ENCODE measurements at regions of chr11 and their contacts with region 1.

Region 1: DNA sequence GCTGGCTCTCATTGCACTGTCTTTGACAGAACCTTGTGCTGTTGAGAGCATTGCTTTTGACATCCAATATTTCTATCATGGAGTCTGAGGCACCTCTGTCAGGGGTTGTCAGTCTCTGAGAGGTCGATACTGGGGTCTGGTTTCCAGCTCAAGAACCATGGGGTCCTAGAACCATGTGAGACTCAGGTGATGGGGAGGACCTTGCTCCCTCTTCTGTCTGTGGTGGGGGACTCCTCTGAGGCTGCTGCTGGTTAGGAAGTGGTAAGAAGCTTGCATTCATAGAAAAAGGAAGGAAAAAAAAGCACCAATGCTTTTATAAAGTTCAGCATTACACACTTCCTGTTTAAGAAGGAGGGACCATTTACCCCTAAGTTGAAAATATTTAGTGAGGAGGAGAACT is 91.8 kb upstream of the CD44 start:
- DNase-seq: peak; percentile 27 to 91 (median 46)
- ATAC-seq: peak; percentile 70
- H3K4me3 ChIP-seq: no peak overlapping the region
- H3K4me3 Mint-ChIP-seq: peak overlapping the region; percentile 83
- H3K27ac ChIP-seq: peak overlapping the region; percentile 93 to 96
- H3K27ac Mint-ChIP-seq: peak overlapping the region; percentile 92
- H3K4me1 ChIP-seq: peaks cover 83% of the 10 kb centered on the region
- H3K4me1 Mint-ChIP-seq: peaks cover 98% of the 10 kb centered on the region
- H3K27me3 ChIP-seq: no peaks in the 10 kb centered on the region
- H3K27me3 Mint-ChIP-seq: no peaks in the 10 kb centered on the region
- CTCF ChIP-seq: no peak

Region 2: GRCh38 chr11:35013514-35014233 is 33.5 kb before region 1 on chr11:
- CTCF ChIA-PET with region 1: interaction called, 6 read pairs
- POLR2A ChIA-PET with region 1: interaction called, 5 read pairs
- intact Hi-C with region 1: loop called in 1 of 2 experiments (anchors 2 kb)
- DNase-seq: peak in 6 of 14 experiments; percentile 18 to 85 (median 53)
- ATAC-seq: peak; percentile 81
- H3K4me3 ChIP-seq: no peak overlapping the region
- H3K4me3 Mint-ChIP-seq: peak overlapping the region; percentile 36
- H3K27ac ChIP-seq: peak overlapping the region; percentile 46 to 80
- H3K27ac Mint-ChIP-seq: peak overlapping the region; percentile 88
- H3K4me1 ChIP-seq: peaks cover 28% of the 10 kb centered on the region
- H3K4me1 Mint-ChIP-seq: peaks cover 37% of the 10 kb centered on the region
- H3K27me3 ChIP-seq: no peaks in the 10 kb centered on the region
- H3K27me3 Mint-ChIP-seq: no peaks in the 10 kb centered on the region
- CTCF ChIP-seq: no peak

Region 3: GRCh38 chr11:35058669-35059434 is 11.7 kb after region 1 on chr11:
- CTCF ChIA-PET with region 1: interaction called, 6 read pairs
- POLR2A ChIA-PET with region 1: interaction called, 12 read pairs
- intact Hi-C with region 1: no loop called
- DNase-seq: peak in 1 of 14 experiments; percentile 47
- ATAC-seq: peak; percentile 39
- H3K4me3 ChIP-seq: no peak overlapping the region
- H3K4me3 Mint-ChIP-seq: no peak overlapping the region
- H3K27ac ChIP-seq: peak overlapping the region in 1 of 2 donors; percentile 17
- H3K27ac Mint-ChIP-seq: peak overlapping the region; percentile 76
- H3K4me1 ChIP-seq: peaks cover 26% of the 10 kb centered on the region
- H3K4me1 Mint-ChIP-seq: peaks cover 53% of the 10 kb centered on the region
- H3K27me3 ChIP-seq: no peaks in the 10 kb centered on the region
- H3K27me3 Mint-ChIP-seq: no peaks in the 10 kb centered on the region
- CTCF ChIP-seq: no peak

Region 4: DNA sequence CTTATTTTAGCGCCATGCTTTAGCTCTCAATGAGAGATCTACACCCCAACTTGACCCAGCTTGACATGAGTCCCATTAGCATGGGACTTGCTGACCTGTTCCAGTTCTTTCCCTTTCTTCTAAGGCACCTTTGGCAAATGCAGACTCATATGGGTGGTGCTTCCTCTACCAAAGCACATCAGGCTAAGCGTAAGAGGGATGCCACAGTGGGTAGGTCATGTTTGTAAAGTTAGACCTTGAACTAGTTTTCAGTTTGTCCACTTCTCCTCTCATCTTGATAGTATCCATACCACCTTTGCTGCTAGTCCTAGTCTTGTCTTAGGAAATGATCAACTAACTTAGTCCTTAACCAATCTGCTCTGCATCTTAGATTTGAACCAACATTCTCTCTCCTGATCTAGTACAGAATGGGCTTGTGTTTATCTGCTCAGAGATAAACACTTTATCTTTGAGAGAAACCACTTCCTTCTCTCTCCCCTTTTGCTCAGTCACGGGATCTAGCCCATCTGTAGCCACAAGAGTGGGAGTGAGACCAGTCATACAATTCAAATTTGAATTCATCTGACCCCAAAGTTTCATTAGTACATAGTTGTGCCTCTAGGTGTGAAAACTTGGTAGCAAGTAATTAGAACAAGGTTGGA is 19.7 kb after region 1 on chr11:
- CTCF ChIA-PET with region 1: interaction called, 5 read pairs
- POLR2A ChIA-PET with region 1: interaction called, 15 read pairs
- intact Hi-C with region 1: no loop called
- DNase-seq: peak in 4 of 14 experiments; percentile 43 to 75 (median 62)
- ATAC-seq: peak; percentile 67
- H3K4me3 ChIP-seq: no peak overlapping the region
- H3K4me3 Mint-ChIP-seq: peak overlapping the region; percentile 40
- H3K27ac ChIP-seq: peak overlapping the region in 1 of 2 donors; percentile 56
- H3K27ac Mint-ChIP-seq: peak overlapping the region; percentile 62
- H3K4me1 ChIP-seq: peaks cover 26% of the 10 kb centered on the region
- H3K4me1 Mint-ChIP-seq: peaks cover 31% of the 10 kb centered on the region
- H3K27me3 ChIP-seq: no peaks in the 10 kb centered on the region
- H3K27me3 Mint-ChIP-seq: no peaks in the 10 kb centered on the region
- CTCF ChIP-seq: no peak

Measured in CD4-positive, alpha-beta T cell (primary cell).